Spleen (tissue), 13 donors: ENCODE measurements at regions of chrX and their contacts with region 1.

Region 1: GRCh38 chrX:153609917-153610428 is 11.0 kb upstream of the CCNQ start:
- DNase-seq: peak; percentile 93
- H3K4me3 ChIP-seq: peak overlapping the region; percentile 25 to 70 (median 36)
- H3K27ac ChIP-seq: peak overlapping the region in 4 of 8 donors; percentile 37 to 65 (median 44)
- H3K4me1 ChIP-seq: peaks cover 0 to 15% (median 12%) of the 10 kb centered on the region in 6 donors
- H3K27me3 ChIP-seq: peaks cover 0 to 46% (median 4%) of the 10 kb centered on the region in 7 donors
- CTCF ChIP-seq: peak; percentile 48 to 86 (median 79)
- POLR2A ChIP-seq: no peak

Region 2: DNA sequence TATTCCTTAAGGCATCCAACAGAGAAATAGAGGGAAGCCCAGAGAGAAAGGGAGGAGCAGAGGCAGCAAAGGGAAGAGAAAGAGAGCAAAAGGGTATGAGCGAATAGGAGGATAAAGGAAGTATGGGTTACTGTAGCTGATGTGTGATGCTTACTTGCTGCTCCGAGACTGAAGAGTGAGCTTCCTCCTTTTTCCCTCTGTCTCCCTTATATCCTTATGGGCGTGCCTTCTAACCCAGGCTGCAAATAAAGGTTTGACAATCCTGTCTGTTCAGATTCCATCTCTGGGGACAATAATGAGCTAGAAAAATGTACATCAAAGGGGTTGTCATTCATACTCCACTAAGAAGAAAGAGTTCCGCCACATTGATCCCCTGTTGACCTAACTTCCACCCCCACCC is 1158.4 kb before region 1 on chrX:
- intact Hi-C with region 1: no loop called
- DNase-seq: no peak
- H3K4me3 ChIP-seq: no peak overlapping the region
- H3K27ac ChIP-seq: no peak overlapping the region
- H3K4me1 ChIP-seq: no peaks in the 10 kb centered on the region
- H3K27me3 ChIP-seq: no peaks in the 10 kb centered on the region
- CTCF ChIP-seq: no peak
- POLR2A ChIP-seq: no peak

Region 3: GRCh38 chrX:153667956-153668396 is 58.0 kb after region 1 on chrX:
- intact Hi-C with region 1: loop called (anchors 10 kb)
- DNase-seq: peak; percentile 89
- H3K4me3 ChIP-seq: peak overlapping the region in 1 of 8 donors; percentile 43
- H3K27ac ChIP-seq: no peak overlapping the region
- H3K4me1 ChIP-seq: peaks cover 0 to 8% (median under 1%) of the 10 kb centered on the region in 6 donors
- H3K27me3 ChIP-seq: peaks cover 0 to 44% (median 11%) of the 10 kb centered on the region in 7 donors
- CTCF ChIP-seq: peak; percentile 56 to 88 (median 81)
- POLR2A ChIP-seq: no peak